CD14-positive monocyte (primary cell): ENCODE measurements at regions of chr15 and their contacts with region 1.

Region 1: GRCh38 chr15:82809404-82810060 is at the start of gene WHAMM:
- DNase-seq: peak; percentile 95 to 98 (median 96)
- H3K4me3 ChIP-seq: peak within 1 kb of the TSS; percentile 62 to 85 (median 64)
- H3K4me3 Mint-ChIP-seq: peak within 1 kb of the TSS; percentile 93 to 95
- H3K27ac ChIP-seq: peak within 1 kb of the TSS; percentile 87 to 96
- H3K27ac Mint-ChIP-seq: peak within 1 kb of the TSS; percentile 89 to 95 (median 90)
- H3K4me1 ChIP-seq: peaks cover 21 to 29% of the 10 kb centered on the region in 2 donors
- H3K4me1 Mint-ChIP-seq: peaks cover 30% of the 10 kb centered on the region
- H3K27me3 ChIP-seq: no peaks in the 10 kb centered on the region
- H3K27me3 Mint-ChIP-seq: no peaks in the 10 kb centered on the region
- CTCF ChIP-seq: no peak
- polyA plus RNA-seq, gene WHAMM: 0.69 to 7.8 (median 0.92) TPM

Region 2: DNA sequence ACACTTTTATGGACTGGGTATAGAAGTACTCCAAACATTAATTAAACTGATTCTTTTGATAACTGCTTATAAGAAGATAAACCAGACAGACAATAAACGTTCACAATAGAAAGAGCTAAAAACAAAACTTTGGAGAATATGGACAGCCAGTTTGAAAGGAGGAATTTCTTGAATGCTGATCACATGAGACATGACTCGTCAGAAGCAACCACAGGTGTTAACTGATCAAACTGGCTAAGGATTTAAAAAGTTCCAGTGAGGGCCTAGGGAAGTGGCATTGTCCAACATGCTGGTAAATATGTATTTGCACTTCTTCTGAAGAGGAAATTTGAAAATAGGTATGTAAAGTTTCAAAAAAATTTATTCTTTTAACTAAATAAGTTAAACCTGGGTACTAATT is 70.4 kb before region 1 on chr15:
- intact Hi-C with region 1: no loop called
- DNase-seq: no peak
- H3K4me3 ChIP-seq: no peak overlapping the region
- H3K4me3 Mint-ChIP-seq: no peak overlapping the region
- H3K27ac ChIP-seq: no peak overlapping the region
- H3K27ac Mint-ChIP-seq: no peak overlapping the region
- H3K4me1 ChIP-seq: no peaks in the 10 kb centered on the region
- H3K4me1 Mint-ChIP-seq: no peaks in the 10 kb centered on the region
- H3K27me3 ChIP-seq: no peaks in the 10 kb centered on the region
- H3K27me3 Mint-ChIP-seq: peaks cover 0 to 2% (median 0%) of the 10 kb centered on the region in 3 donors
- CTCF ChIP-seq: no peak

Region 3: GRCh38 chr15:82749951-82750830 is 59.3 kb before region 1 on chr15:
- intact Hi-C with region 1: loop called in 1 of 2 experiments (anchors 5 kb)
- DNase-seq: peak; percentile 72 to 84 (median 80)
- H3K4me3 ChIP-seq: peak overlapping the region; percentile 56 to 94 (median 89)
- H3K4me3 Mint-ChIP-seq: peak overlapping the region; percentile 99 to 100
- H3K27ac ChIP-seq: peak overlapping the region; percentile 46 to 87
- H3K27ac Mint-ChIP-seq: peak overlapping the region; percentile 93 to 98 (median 97)
- H3K4me1 ChIP-seq: peaks cover 24 to 28% of the 10 kb centered on the region in 2 donors
- H3K4me1 Mint-ChIP-seq: peaks cover 31% of the 10 kb centered on the region
- H3K27me3 ChIP-seq: no peaks in the 10 kb centered on the region
- H3K27me3 Mint-ChIP-seq: peaks cover 0 to 2% (median 1%) of the 10 kb centered on the region in 3 donors
- CTCF ChIP-seq: no peak

Region 4: DNA sequence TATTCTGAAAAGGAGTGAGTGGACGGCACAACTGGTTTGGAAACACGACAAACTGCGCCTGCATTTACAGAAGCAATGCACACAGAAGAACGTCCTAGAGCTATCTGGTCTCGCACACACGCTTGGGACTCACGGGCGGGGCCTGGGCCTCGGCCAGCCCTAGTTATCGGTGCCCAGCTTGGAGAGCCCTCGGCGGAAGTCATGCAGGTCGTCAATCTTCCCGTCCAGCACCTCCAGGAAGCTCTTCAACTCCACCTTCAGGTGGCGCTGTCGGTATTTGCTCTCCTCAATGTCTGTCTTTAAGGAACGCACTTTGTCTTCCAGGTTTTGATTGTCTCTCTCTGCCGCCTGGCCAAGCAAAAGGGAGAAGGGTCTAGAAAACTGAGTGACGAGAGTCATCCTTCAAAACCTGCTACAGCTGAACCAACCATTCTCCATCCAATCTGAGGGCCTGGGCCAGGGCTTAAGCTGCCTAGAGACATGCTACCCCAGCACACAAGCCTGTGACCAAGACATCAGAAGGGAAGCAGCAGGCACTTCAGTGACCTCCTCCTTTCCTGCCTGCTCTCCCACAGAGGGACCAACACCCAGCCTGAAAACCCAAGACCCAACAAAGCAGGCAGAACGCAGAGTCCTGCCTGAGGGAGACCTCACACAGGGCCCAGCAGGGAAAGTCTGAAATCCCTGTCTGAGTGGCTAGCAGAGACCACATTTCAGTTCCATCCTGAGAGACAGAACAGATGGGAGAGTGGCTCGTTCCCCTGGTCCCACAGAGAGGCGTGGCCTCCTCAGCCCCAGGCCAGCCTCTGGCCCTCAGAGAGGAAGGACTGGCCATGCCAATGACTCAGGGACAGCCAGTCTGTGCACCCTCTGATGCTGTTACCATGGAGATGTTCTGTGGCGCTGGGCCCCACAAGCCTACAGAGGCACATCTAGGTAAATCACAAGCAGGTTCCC is 40.3 kb after region 1 on chr15:
- intact Hi-C with region 1: loop called in 1 of 2 experiments (anchors 5 kb)
- DNase-seq: peak; percentile 76 to 84 (median 80)
- H3K4me3 ChIP-seq: no peak overlapping the region
- H3K4me3 Mint-ChIP-seq: peak overlapping the region; percentile 60 to 81
- H3K27ac ChIP-seq: peak overlapping the region in 1 of 2 donors; percentile 42
- H3K27ac Mint-ChIP-seq: peak overlapping the region in 5 of 7 donors; percentile 4 to 79 (median 64)
- H3K4me1 ChIP-seq: peaks cover 26 to 28% of the 10 kb centered on the region in 2 donors
- H3K4me1 Mint-ChIP-seq: peaks cover 26% of the 10 kb centered on the region
- H3K27me3 ChIP-seq: no peaks in the 10 kb centered on the region
- H3K27me3 Mint-ChIP-seq: peaks cover 0 to 2% (median 1%) of the 10 kb centered on the region in 3 donors
- CTCF ChIP-seq: peak; percentile 85

Region 5: GRCh38 chr15:82985688-82986441 is 176.3 kb after region 1 on chr15 and contains the start of gene RAMAC:
- intact Hi-C with region 1: loop called in 1 of 2 experiments (anchors 5 kb)
- DNase-seq: peak; percentile 93 to 96 (median 95)
- H3K4me3 ChIP-seq: peak within 1 kb of the TSS; percentile 66 to 84 (median 80)
- H3K4me3 Mint-ChIP-seq: peak within 1 kb of the TSS; percentile 97 to 98
- H3K27ac ChIP-seq: peak within 1 kb of the TSS; percentile 46 to 82
- H3K27ac Mint-ChIP-seq: peak within 1 kb of the TSS; percentile 86 to 96 (median 90)
- H3K4me1 ChIP-seq: peaks cover 15 to 18% of the 10 kb centered on the region in 2 donors
- H3K4me1 Mint-ChIP-seq: peaks cover 19% of the 10 kb centered on the region
- H3K27me3 ChIP-seq: no peaks in the 10 kb centered on the region
- H3K27me3 Mint-ChIP-seq: no peaks in the 10 kb centered on the region
- CTCF ChIP-seq: no peak
- polyA plus RNA-seq, gene RAMAC: 6.1 to 39.9 (median 27.7) TPM

Region 6: DNA sequence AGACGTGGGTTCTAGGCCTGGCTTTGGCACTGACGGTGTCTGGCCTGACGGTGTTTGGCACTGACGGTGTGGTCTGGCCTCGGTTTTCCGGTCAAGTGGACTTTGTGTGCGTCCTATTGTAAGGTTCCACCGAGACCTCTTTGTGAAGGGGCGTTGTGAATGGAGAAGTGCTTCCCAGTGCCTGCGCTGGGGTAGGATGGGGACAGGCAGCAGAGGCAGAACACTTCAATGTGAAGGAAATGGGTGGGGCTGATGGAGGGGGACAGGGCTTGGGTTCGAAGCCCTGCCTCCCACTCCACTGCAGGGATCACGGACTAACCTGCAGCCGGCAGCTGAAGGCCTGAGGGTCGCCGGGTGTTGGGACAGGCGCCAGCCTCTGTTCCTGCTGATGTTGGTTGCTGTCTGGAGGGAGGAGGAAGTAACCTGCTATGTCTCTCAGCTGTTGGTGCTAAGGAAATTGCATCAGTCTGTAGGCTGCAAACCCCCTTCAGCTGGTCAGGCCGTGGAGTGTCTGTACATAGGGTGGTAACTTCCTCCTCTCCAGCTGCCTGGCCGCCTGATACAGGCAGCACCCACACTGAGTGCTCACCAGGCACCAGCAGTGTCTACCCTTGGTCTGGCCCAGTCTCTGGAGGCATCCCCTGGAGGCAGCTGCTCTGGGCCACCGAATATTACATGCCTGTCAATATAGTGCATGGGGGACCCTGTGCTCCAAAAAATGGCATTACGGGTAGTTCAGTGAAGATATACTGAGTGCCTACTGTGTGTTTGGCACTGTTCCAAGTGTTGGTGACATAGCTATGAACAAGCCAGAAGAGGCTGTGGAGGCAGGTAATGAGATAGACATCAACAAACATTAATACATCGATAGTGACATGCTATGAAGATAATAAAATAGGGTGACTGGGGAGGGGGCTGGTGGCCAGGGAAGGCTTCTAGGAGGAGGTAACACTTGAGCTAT is 299.0 kb after region 1 on chr15:
- intact Hi-C with region 1: no loop called
- DNase-seq: peak; percentile 91 to 96 (median 95)
- H3K4me3 ChIP-seq: peak overlapping the region; percentile 62 to 95 (median 66)
- H3K4me3 Mint-ChIP-seq: peak overlapping the region; percentile 95 to 99
- H3K27ac ChIP-seq: peak overlapping the region; percentile 66 to 96
- H3K27ac Mint-ChIP-seq: peak overlapping the region; percentile 95 to 97 (median 96)
- H3K4me1 ChIP-seq: peaks cover 27 to 36% of the 10 kb centered on the region in 2 donors
- H3K4me1 Mint-ChIP-seq: peaks cover 41% of the 10 kb centered on the region
- H3K27me3 ChIP-seq: peaks cover 0 to 4% of the 10 kb centered on the region in 2 donors
- H3K27me3 Mint-ChIP-seq: peaks cover 6 to 25% (median 8%) of the 10 kb centered on the region in 3 donors
- CTCF ChIP-seq: no peak